BJ (cell line): ENCODE measurements at regions of chr7 and their contacts with region 1.

Region 1: DNA sequence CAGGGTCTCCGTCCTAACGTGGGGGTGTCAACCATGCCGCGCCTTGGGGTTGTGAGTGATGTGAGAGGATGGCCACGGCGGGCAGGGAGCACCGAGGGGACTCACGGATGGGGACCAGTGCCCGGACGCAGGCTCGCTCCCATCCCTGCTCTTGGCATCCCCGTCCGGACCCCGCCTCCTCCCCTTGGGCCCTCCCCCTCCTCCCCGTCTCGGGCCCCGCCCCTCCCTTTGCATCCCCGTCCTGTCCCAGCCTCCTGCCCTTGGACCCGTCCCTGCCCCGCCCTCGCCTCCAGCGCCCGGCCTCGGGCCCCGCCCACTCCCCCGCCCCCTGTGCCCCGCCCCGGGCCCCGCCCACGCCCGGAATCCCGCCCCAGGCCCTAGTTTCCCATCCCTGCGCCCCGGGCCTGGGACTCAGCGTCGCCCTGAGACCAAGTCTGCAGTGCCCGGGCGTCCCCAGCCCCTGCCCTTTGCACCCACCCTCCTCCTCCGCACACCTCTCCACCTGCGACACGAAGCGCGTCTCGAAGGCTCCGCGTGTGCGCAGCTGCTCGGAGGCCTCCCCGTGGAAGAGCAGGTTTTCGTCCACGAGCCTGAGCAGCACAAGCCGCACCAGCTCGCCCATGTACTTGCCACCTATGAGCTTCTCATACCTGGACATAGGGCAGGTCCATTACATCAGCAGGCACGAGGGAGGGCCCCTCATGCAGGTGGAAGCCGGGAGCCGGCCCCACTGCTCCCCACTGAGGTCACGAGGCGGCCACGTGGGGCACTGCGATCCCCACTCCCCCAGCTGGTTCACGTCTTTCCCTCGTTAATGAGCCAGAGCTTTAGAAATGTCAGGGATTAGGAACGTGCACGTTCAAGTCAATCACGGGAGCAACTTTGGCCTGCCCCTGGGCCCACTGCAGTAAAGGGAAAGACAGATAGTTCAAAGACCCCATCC is 5.1 kb upstream of the MYL7 start:
- DNase-seq: no peak
- H3K4me3 ChIP-seq: peak overlapping the region; percentile 25
- H3K27me3 ChIP-seq: peaks cover 4% of the 10 kb centered on the region
- CTCF ChIP-seq: no peak

Region 2: DNA sequence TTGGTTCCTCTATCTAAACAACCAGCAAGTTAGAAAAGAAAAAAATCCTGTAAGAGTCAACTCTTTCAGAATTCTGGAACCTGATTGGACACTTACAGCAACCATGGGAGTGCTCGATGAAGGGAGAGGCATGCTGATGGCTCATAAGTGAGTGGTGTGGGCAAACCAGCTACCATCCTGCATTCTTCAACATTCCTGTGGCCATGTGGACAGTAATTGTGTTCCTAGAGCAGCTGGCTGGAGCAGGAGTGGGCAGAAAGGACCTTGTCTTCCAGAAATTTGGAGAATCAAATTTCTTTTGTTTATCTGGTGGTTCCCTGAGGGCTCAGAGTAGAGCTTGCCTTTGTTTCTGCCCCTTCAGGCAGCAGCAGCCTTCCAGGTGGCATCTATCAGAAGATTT is 17.4 kb after region 1 on chr7:
- CTCF ChIA-PET with region 1: interaction called, 11 read pairs
- POLR2A ChIA-PET with region 1: interaction called, 4 read pairs
- DNase-seq: peak; percentile 85
- H3K4me3 ChIP-seq: no peak overlapping the region
- H3K27me3 ChIP-seq: 0 out of 2 replicates have a peak, but pooled peaks cover 1% of the 10 kb centered on the region
- CTCF ChIP-seq: no peak

Region 3: GRCh38 chr7:45328403-45328981 is 1182.3 kb after region 1 on chr7:
- CTCF ChIA-PET with region 1: no interaction called
- POLR2A ChIA-PET with region 1: no interaction called
- DNase-seq: no peak
- H3K4me3 ChIP-seq: no peak overlapping the region
- H3K27me3 ChIP-seq: no peaks in the 10 kb centered on the region
- CTCF ChIP-seq: no peak